Naive thymus-derived CD4-positive, alpha-beta T cell (primary cell): ENCODE measurements at regions of chr9 and their contacts with region 1.

Region 1: GRCh38 chr9:72864327-72864726 is 88.5 kb downstream of the ALDH1A1 start:
- DNase-seq: no peak
- ATAC-seq: no peak
- H3K4me3 ChIP-seq: no peak overlapping the region
- H3K4me3 Mint-ChIP-seq: no peak overlapping the region
- H3K27ac ChIP-seq: no peak overlapping the region
- H3K27ac Mint-ChIP-seq: no peak overlapping the region
- H3K4me1 ChIP-seq: no peaks in the 10 kb centered on the region
- H3K4me1 Mint-ChIP-seq: no peaks in the 10 kb centered on the region
- H3K27me3 ChIP-seq: no peaks in the 10 kb centered on the region
- H3K27me3 Mint-ChIP-seq: peaks cover 0 to 13% (median 9%) of the 10 kb centered on the region in 5 donors

Region 2: GRCh38 chr9:71036501-71036900 is 1827.8 kb before region 1 on chr9:
- CTCF ChIA-PET with region 1: no interaction called
- POLR2A ChIA-PET with region 1: no interaction called
- intact Hi-C with region 1: loop called in 1 of 2 experiments (anchors 5 kb)
- DNase-seq: no peak
- ATAC-seq: no peak
- H3K4me3 ChIP-seq: no peak overlapping the region
- H3K4me3 Mint-ChIP-seq: no peak overlapping the region
- H3K27ac ChIP-seq: no peak overlapping the region
- H3K27ac Mint-ChIP-seq: no peak overlapping the region
- H3K4me1 ChIP-seq: no peaks in the 10 kb centered on the region
- H3K4me1 Mint-ChIP-seq: no peaks in the 10 kb centered on the region
- H3K27me3 ChIP-seq: no peaks in the 10 kb centered on the region
- H3K27me3 Mint-ChIP-seq: peaks cover 0 to 10% (median 0%) of the 10 kb centered on the region in 5 donors